GM13977 (cell line): ENCODE measurements at regions of chr11 and their contacts with region 1.

Region 1: GRCh38 chr11:45771566-45772448 is 33.1 kb upstream of the SLC35C1 start:
- DNase-seq: peak; percentile 90
- CTCF ChIP-seq: peak; percentile 96

Region 2: DNA sequence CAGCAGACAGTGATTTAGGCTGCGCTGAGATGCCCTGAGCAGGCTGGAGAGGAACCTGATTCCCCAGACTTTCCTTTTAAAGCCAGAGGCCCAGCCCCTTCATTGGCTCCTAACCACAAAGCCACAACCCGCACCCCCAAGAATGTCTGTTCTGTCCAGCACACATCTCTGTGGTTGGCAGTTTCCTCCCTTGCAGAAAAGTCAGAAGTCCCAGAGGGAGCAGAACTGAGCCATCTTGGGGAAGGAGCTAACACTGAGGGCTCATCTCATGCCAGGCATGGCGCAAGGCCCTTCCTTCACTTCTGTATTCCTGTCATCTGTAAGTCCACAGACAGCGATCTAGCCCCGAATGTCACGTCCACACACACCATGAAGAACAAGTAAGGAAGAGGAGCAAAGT is 388.6 kb before region 1 on chr11:
- in situ Hi-C with region 1: loop called (anchors 25 kb)
- DNase-seq: no peak
- CTCF ChIP-seq: no peak

Region 3: GRCh38 chr11:45655347-45655756 is 116.5 kb before region 1 on chr11:
- in situ Hi-C with region 1: no loop called
- DNase-seq: peak; percentile 83
- CTCF ChIP-seq: peak; percentile 98

Region 4: GRCh38 chr11:45665206-45665932 is 106.4 kb before region 1 on chr11 and contains the start of gene CHST1:
- in situ Hi-C with region 1: no loop called
- DNase-seq: peak; percentile 66
- CTCF ChIP-seq: no peak

Region 5: GRCh38 chr11:45896422-45896984 is 124.7 kb after region 1 on chr11:
- in situ Hi-C with region 1: no loop called
- DNase-seq: no peak
- CTCF ChIP-seq: no peak